GM10248 (cell line): ENCODE measurements at regions of chr11 and their contacts with region 1.

Region 1: GRCh38 chr11:119084663-119085436 is at the start of gene HMBS:
- DNase-seq: peak; percentile 92
- CTCF ChIP-seq: no peak

Region 2: GRCh38 chr11:119095066-119095880 is 10.4 kb after region 1 on chr11:
- CTCF ChIA-PET with region 1: interaction called, 7 read pairs
- POLR2A ChIA-PET with region 1: interaction called, 76 read pairs
- DNase-seq: peak; percentile 98
- CTCF ChIP-seq: no peak

Region 3: DNA sequence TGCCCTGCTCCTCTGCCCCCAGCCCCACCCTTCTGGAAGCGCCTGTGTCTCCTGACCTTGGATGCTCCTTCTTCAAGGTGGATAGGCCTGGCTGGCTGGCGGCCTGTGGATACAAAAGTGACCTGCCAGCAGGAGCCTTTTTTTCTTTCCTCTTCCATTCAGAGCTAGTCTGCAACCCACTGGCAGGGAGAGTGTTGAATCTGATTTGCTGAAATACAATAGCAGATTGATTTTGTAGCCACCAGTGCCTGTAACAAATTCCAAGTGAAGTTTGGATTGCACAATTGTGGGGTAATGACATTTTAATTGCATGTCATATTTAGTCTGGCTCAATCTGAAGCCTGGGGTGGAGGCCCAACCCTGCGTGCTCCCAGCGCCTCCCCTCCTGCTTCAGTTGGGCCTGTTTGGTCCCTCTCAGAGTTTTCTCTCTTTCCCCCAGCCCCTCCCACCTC is 1523.9 kb after region 1 on chr11:
- CTCF ChIA-PET with region 1: no interaction called
- POLR2A ChIA-PET with region 1: interaction called, 12 read pairs
- DNase-seq: no peak
- CTCF ChIP-seq: no peak